ENCODE measurements at regions of chr12 and their contacts with region 1.

Region 1: GRCh38 chr12:106223485-106224354 is 24.1 kb downstream of the CKAP4 start:
- DNase-seq: peak; percentile 59
- H3K4me3 Mint-ChIP-seq: no peak overlapping the region
- H3K27ac Mint-ChIP-seq: no peak overlapping the region
- H3K4me1 Mint-ChIP-seq: peaks cover 29% of the 10 kb centered on the region
- H3K27me3 Mint-ChIP-seq: peaks cover 3% of the 10 kb centered on the region

Region 2: GRCh38 chr12:106282457-106283097 is 58.9 kb after region 1 on chr12:
- intact Hi-C with region 1: loop called (anchors 1 kb)
- DNase-seq: peak; percentile 19
- H3K4me3 Mint-ChIP-seq: no peak overlapping the region
- H3K27ac Mint-ChIP-seq: no peak overlapping the region
- H3K4me1 Mint-ChIP-seq: peaks cover 13% of the 10 kb centered on the region
- H3K27me3 Mint-ChIP-seq: peaks cover 6% of the 10 kb centered on the region

Region 3: DNA sequence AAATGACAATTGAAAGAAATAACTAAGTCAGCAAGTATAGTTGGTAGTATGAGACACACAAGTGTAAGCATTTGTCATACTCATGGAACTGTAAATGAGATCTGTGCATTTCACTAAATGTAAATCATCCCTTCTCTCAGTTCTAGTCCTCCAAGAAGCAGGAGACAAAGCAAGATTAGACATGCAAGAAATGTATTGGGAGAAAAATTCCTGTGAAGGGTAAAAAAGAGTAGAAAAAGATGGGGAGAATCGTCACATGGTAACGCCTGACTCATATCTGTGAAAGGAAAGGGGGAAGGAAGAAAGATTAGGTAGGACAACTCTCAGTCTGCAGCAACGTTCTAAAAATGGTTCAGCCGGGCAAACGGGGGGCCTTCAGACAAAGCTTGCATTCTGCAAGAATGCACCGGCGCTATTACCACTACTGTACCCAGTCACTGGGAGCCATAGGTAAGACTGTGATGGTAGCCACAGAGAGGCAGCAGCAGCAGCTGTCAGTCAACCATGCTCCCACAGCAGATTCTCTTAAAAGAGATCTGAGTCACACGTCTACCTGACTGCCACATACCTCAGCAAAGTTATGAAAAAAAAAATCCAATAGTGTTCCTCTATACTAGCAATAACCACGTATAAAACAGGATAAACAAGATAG is 341.1 kb after region 1 on chr12:
- intact Hi-C with region 1: no loop called
- DNase-seq: no peak
- H3K4me3 Mint-ChIP-seq: no peak overlapping the region
- H3K27ac Mint-ChIP-seq: no peak overlapping the region
- H3K4me1 Mint-ChIP-seq: no peaks in the 10 kb centered on the region
- H3K27me3 Mint-ChIP-seq: peaks cover 14% of the 10 kb centered on the region